ENCODE measurements at regions of chr16 and their contacts with region 1.

Region 1: GRCh38 chr16:2531767-2532493 is 722 bp upstream of the CEMP1 start:
- DNase-seq: peak; percentile 93 to 98 (median 97)
- ATAC-seq: peak; percentile 87
- H3K4me3 ChIP-seq: peak overlapping the region; percentile 75 to 92
- H3K4me3 Mint-ChIP-seq: peak overlapping the region; percentile 98
- H3K27ac ChIP-seq: peak overlapping the region; percentile 91 to 99
- H3K27ac Mint-ChIP-seq: peak overlapping the region; percentile 100
- H3K4me1 ChIP-seq: peaks cover 13% of the 10 kb centered on the region
- H3K4me1 Mint-ChIP-seq: peaks cover 20% of the 10 kb centered on the region
- H3K27me3 ChIP-seq: no peaks in the 10 kb centered on the region
- H3K27me3 Mint-ChIP-seq: no peaks in the 10 kb centered on the region
- CTCF ChIP-seq: no peak

Region 2: DNA sequence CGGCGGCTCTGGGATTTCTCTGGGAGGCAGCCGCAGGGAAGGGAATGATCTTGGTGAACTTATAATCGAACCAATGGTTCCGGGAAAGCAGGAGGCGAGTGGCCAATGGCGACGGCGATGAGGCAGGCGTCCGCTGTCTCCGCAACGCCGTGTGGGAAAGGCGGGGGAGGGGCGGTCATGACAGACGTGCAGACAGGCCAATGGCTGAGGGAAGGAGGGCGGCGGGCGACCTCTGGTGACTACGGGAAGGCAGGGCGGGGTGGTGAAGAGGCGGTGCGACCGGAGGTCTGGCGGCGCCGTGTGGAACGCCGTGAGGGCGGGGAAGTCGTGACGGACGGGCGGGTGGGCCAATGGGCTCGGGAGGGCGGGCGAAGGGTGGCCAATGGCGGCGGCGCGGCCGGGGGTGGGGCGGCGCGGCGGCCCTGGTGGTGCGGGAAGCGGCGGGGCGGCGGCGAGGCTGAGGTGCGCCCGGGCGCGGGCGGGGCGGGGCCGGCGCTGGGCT is 1942.2 kb before region 1 on chr16 and contains the start of gene RAB40C:
- CTCF ChIA-PET with region 1: no interaction called
- POLR2A ChIA-PET with region 1: no interaction called
- intact Hi-C with region 1: loop called in 1 of 2 experiments (anchors 10 kb)
- DNase-seq: peak; percentile 98 to 100 (median 99)
- ATAC-seq: peak; percentile 81
- H3K4me3 ChIP-seq: peak within 1 kb of the TSS; percentile 70 to 98
- H3K4me3 Mint-ChIP-seq: peak within 1 kb of the TSS; percentile 95
- H3K27ac ChIP-seq: peak within 1 kb of the TSS; percentile 84 to 93
- H3K27ac Mint-ChIP-seq: peak within 1 kb of the TSS; percentile 98
- H3K4me1 ChIP-seq: peaks cover 29% of the 10 kb centered on the region
- H3K4me1 Mint-ChIP-seq: peaks cover 40% of the 10 kb centered on the region
- H3K27me3 ChIP-seq: no peaks in the 10 kb centered on the region
- H3K27me3 Mint-ChIP-seq: no peaks in the 10 kb centered on the region
- CTCF ChIP-seq: no peak
- total RNA-seq, gene RAB40C: 3.9 to 5.9 TPM

Region 3: GRCh38 chr16:2047330-2048115 is 484.4 kb before region 1 on chr16 and contains the starts of genes NTHL1 and TSC2:
- CTCF ChIA-PET with region 1: no interaction called
- POLR2A ChIA-PET with region 1: no interaction called
- intact Hi-C with region 1: no loop called
- DNase-seq: peak; percentile 82 to 96 (median 92)
- ATAC-seq: peak; percentile 89
- H3K4me3 ChIP-seq: peak within 1 kb of the TSS; percentile 90 to 93
- H3K4me3 Mint-ChIP-seq: peak within 1 kb of the TSS; percentile 91
- H3K27ac ChIP-seq: peak within 1 kb of the TSS; percentile 60 to 64
- H3K27ac Mint-ChIP-seq: peak within 1 kb of the TSS; percentile 62
- H3K4me1 ChIP-seq: peaks cover 17% of the 10 kb centered on the region
- H3K4me1 Mint-ChIP-seq: peaks cover 24% of the 10 kb centered on the region
- H3K27me3 ChIP-seq: no peaks in the 10 kb centered on the region
- H3K27me3 Mint-ChIP-seq: no peaks in the 10 kb centered on the region
- CTCF ChIP-seq: peak; percentile 39
- total RNA-seq, gene NTHL1: 1.7 to 2.0 TPM
- total RNA-seq, gene TSC2: 76.2 to 84.1 TPM

Region 4: DNA sequence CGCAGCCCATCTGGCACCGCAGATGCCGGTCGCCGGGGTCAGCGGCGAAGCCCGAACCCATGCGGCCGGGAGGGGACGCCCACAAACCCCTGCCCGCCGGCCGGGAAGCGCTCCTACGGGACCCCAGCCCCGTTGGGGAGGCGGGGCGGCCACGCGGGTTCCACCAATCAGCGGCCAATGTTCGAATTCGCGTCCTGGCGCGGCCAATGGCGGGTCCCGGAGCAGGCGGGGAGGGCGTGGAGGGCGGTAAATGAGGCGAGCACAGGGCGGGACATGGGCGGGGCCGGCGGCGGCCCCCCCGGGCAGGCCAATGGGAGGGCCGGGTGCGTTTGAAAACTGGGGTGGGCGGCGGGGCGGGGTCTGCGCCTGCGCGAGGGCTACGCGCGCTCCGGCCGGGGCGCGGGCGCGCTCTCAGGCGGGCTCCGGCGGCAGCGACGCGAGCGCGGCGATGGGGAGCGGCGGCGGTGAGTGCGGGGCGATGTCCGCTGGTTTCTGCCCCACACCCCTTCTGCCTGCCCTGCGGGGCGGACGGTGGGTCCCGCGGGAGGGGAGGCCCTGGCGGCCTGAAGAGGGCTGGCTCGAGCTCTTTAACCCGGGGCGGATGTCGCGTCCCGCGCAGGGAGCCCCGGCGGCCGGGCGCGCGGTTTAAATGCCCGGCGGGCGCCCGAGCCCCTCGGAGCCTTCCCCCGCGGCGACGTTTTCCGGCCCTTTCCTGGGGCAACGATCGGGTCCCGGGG is 102.7 kb before region 1 on chr16 and contains the start of gene CCNF:
- CTCF ChIA-PET with region 1: no interaction called
- POLR2A ChIA-PET with region 1: no interaction called
- intact Hi-C with region 1: loop called in 1 of 2 experiments (anchors 2 kb)
- DNase-seq: peak; percentile 96 to 98 (median 98)
- ATAC-seq: peak; percentile 98
- H3K4me3 ChIP-seq: peak within 1 kb of the TSS; percentile 81 to 92
- H3K4me3 Mint-ChIP-seq: peak within 1 kb of the TSS; percentile 85
- H3K27ac ChIP-seq: peak within 1 kb of the TSS; percentile 35 to 43
- H3K27ac Mint-ChIP-seq: peak within 1 kb of the TSS; percentile 64
- H3K4me1 ChIP-seq: peaks cover 12% of the 10 kb centered on the region
- H3K4me1 Mint-ChIP-seq: peaks cover 14% of the 10 kb centered on the region
- H3K27me3 ChIP-seq: no peaks in the 10 kb centered on the region
- H3K27me3 Mint-ChIP-seq: no peaks in the 10 kb centered on the region
- CTCF ChIP-seq: no peak
- total RNA-seq, gene CCNF: 0.61 to 1.2 TPM

Region 5: DNA sequence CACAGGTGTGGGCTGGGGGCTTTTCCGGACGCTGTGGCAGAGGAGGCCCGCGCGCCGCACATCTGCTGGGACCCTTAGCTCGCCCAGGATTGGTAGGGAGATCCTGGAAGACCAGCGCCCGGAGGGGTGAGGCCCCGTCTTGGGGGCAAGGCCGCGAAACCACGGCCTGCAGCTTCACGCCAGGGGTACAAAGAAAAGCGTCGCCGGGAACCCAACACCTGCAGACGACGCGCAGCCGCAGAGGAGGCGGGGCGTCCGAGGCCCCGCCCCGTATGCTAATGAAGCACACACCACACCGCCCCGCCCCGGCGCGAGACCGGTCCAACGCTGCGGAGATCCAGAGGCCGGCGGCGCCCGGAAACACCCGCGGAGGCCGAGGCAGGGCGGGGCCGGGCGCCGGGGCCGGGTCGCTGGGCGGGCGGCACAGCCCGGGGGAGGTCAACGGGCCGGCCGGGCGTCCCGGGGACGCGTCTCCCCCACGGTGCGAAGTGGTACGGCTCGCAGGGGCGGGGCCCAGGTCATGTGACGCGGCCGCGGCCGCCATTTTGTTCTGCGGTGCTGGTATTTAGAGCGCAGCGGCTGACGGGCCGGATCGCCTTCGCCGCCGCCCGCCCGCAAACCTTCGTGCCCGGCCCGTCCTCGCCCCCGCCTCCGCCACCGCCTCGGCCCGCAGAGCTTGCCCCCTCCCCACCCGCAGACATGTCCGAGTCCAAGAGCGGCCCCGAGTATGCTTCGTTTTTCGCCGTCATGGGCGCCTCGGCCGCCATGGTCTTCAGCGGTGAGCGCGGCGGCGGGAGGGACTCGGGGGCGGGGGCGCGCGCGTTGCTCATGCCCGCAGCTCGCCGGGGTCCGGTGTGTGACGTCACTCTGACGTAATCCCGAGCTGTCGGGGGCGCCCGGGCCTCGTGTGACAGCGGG is 18.3 kb before region 1 on chr16 and contains the start of gene ATP6V0C:
- CTCF ChIA-PET with region 1: no interaction called
- POLR2A ChIA-PET with region 1: interaction called, 59 read pairs
- intact Hi-C with region 1: loop called (anchors 1 kb)
- DNase-seq: peak; percentile 84 to 97 (median 92)
- ATAC-seq: peak; percentile 89
- H3K4me3 ChIP-seq: peak within 1 kb of the TSS; percentile 67 to 69
- H3K4me3 Mint-ChIP-seq: peak within 1 kb of the TSS; percentile 94
- H3K27ac ChIP-seq: peak within 1 kb of the TSS; percentile 91 to 94
- H3K27ac Mint-ChIP-seq: peak within 1 kb of the TSS; percentile 97
- H3K4me1 ChIP-seq: peaks cover 47% of the 10 kb centered on the region
- H3K4me1 Mint-ChIP-seq: peaks cover 49% of the 10 kb centered on the region
- H3K27me3 ChIP-seq: no peaks in the 10 kb centered on the region
- H3K27me3 Mint-ChIP-seq: no peaks in the 10 kb centered on the region
- CTCF ChIP-seq: no peak
- total RNA-seq, gene ATP6V0C: 260 TPM

Region 6: DNA sequence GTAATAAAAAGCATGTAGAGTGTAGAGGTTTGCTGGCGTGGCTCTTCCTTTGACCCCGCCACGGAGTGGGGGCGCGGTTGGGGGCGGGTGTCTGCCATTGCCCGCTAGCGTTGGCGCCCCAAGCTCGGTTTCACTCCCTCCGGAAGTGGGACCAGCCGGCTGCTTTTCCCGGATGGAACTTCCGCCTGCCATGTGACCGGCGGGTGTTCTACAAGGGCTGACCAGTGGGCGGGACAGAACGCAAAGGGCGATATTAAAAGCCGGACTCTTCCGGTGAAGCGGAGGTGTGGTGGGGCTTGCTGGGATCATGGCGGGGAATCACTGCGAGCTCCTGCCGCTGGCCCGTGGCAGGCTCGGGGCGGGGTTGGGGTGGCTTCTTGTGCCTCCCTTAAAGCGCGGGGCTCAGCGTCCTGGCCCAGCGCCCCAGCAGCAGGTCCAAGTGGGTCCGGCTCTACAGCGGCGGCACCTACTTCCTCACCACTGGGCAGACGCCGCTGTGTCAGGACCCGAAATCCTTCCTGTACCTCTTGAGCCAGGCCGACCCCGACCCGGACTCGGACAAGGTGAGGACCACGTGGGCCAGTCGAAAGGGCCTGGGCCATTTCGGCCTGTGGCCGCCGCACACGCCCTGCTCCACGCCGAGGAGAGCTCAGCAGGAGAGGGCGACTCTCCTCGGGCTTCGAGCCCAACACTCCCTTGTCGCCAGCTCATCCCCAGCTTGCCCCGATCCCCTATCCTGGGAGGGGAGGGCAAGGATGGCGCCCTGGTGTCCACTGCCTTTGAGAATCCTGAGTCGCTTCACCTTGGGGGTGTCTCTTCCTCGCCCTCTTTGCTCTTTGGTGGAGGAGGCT is 71.5 kb after region 1 on chr16:
- CTCF ChIA-PET with region 1: no interaction called
- POLR2A ChIA-PET with region 1: no interaction called
- intact Hi-C with region 1: loop called in 1 of 2 experiments (anchors 10 kb)
- DNase-seq: peak; percentile 58 to 87 (median 77)
- ATAC-seq: peak; percentile 58
- H3K4me3 ChIP-seq: peak overlapping the region; percentile 64 to 76
- H3K4me3 Mint-ChIP-seq: peak overlapping the region; percentile 97
- H3K27ac ChIP-seq: peak overlapping the region; percentile 32 to 52
- H3K27ac Mint-ChIP-seq: peak overlapping the region; percentile 84
- H3K4me1 ChIP-seq: peaks cover 3% of the 10 kb centered on the region
- H3K4me1 Mint-ChIP-seq: peaks cover 29% of the 10 kb centered on the region
- H3K27me3 ChIP-seq: no peaks in the 10 kb centered on the region
- H3K27me3 Mint-ChIP-seq: no peaks in the 10 kb centered on the region
- CTCF ChIP-seq: no peak

Region 7: DNA sequence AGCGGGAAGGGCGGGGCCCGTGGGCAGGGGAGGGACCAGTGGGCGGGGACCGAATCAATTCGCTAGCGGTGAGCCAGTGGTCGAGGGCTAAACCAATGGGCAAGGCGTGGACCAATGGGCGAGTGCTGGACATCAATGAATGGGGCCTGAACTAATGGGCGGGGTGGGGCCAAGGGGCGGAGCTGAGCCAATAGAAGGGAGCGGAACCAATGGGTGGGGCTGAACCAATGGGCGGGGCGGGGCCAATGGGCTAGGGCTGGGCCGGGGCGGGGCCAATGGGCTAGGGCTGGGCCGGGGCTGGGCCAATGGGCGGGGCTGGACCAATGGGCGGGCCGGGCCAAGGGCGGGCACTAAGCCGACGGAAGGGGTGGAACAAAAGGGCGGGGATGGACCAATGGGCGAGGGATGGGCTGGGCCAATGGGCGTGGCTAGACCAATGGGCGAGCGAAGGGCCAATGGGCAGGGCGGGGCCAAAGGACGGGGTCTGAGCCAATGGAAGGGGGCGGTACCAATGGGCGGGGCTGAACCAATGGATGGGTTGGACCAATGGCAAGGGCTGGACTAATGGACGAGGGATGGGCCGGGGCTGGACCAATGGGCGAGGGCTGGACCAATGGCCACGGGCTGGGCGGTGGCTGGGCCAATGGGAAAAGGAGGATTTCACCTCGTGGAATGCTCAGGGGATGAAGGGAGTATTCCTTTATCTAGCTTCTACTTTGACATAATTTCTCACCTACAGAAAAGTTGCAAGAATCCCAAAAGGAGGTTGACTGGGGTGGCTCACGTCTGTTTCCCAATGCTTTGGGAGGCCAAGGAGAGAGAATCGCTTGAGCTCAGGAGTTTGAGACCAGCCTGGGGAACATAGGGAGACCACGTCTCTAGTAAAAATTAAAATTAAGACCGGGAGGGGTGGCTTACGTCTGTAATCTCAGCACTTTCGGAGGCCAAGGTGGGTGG is 373.8 kb after region 1 on chr16:
- CTCF ChIA-PET with region 1: no interaction called
- POLR2A ChIA-PET with region 1: no interaction called
- intact Hi-C with region 1: loop called in 1 of 2 experiments (anchors 10 kb)
- DNase-seq: peak; percentile 73 to 96 (median 85)
- ATAC-seq: peak; percentile 83
- H3K4me3 ChIP-seq: peak overlapping the region; percentile 86 to 88
- H3K4me3 Mint-ChIP-seq: peak overlapping the region; percentile 91
- H3K27ac ChIP-seq: peak overlapping the region in 1 of 2 experiments; percentile 22
- H3K27ac Mint-ChIP-seq: peak overlapping the region; percentile 55
- H3K4me1 ChIP-seq: peaks cover 11% of the 10 kb centered on the region
- H3K4me1 Mint-ChIP-seq: peaks cover 23% of the 10 kb centered on the region
- H3K27me3 ChIP-seq: peaks cover 0 to 2% of the 10 kb centered on the region in 2 experiments
- H3K27me3 Mint-ChIP-seq: no peaks in the 10 kb centered on the region
- CTCF ChIP-seq: no peak

Region 8: GRCh38 chr16:4416200-4417032 is 1884.5 kb after region 1 on chr16 and contains the start of gene CORO7:
- CTCF ChIA-PET with region 1: no interaction called
- POLR2A ChIA-PET with region 1: no interaction called
- intact Hi-C with region 1: loop called in 1 of 2 experiments (anchors 10 kb)
- DNase-seq: peak; percentile 98 to 100 (median 99)
- ATAC-seq: peak; percentile 78
- H3K4me3 ChIP-seq: peak within 1 kb of the TSS; percentile 51 to 60
- H3K4me3 Mint-ChIP-seq: peak within 1 kb of the TSS; percentile 97
- H3K27ac ChIP-seq: peak within 1 kb of the TSS; percentile 89 to 94
- H3K27ac Mint-ChIP-seq: peak within 1 kb of the TSS; percentile 99
- H3K4me1 ChIP-seq: peaks cover 44% of the 10 kb centered on the region
- H3K4me1 Mint-ChIP-seq: peaks cover 33% of the 10 kb centered on the region
- H3K27me3 ChIP-seq: no peaks in the 10 kb centered on the region
- H3K27me3 Mint-ChIP-seq: no peaks in the 10 kb centered on the region
- CTCF ChIP-seq: no peak
- total RNA-seq, gene CORO7: 950 to 991 TPM